Heart left ventricle (tissue), 16 donors: ENCODE measurements at regions of chr6 and their contacts with region 1.

Region 1: DNA sequence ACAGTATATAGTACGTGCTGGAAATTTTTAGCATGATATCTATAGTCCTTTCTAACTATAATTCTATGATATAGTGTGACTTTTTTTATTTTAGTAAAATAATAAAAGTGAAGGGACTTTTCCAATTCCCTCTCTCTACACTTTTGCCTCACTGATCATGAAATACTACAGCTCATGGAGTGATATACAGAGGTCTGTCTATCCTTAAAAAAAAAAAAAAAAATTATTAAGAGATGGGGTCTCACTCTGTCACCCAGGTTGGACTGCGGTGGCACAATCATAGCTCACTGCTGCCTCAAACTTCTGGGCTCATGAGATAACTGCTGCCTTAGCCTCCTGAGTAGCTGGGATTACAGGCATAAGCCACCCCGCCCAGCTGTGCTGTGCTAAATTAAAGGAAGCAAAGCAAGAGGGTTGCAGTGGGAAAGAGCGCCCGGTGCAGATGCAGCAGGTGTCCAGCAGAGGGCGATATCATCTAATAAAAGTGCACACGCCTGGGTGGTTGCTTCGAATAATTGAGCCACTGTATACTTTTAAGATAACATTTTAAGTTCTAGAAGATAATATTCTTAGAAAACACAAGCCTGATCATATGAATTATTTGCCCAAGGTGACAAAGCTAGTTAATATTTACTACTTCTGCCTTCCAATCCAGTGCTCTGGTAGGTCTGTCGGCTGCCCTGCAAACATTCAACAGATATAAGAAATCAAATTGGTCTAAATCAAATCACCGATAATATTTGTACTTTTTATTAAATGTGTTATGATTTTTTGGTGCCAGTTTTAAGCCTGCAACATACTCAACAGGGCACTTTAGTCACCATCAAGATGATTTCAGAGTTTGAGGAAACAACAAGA is 94.9 kb upstream of the NT5E start:
- DNase-seq: peak; percentile 44 to 73 (median 64)
- ATAC-seq: peak; percentile 64 to 89 (median 86)
- H3K4me3 ChIP-seq: no peak overlapping the region
- H3K27ac ChIP-seq: no peak overlapping the region
- H3K4me1 ChIP-seq: no peaks in the 10 kb centered on the region
- H3K27me3 ChIP-seq: peaks cover 0 to 4% (median 0%) of the 10 kb centered on the region in 9 donors
- CTCF ChIP-seq: peak; percentile 85 to 97 (median 92)
- POLR2A ChIP-seq: no peak

Region 2: GRCh38 chr6:85314586-85314985 is 40.4 kb before region 1 on chr6:
- intact Hi-C with region 1: no loop called
- DNase-seq: no peak
- ATAC-seq: no peak
- H3K4me3 ChIP-seq: no peak overlapping the region
- H3K27ac ChIP-seq: no peak overlapping the region
- H3K4me1 ChIP-seq: no peaks in the 10 kb centered on the region
- H3K27me3 ChIP-seq: no peaks in the 10 kb centered on the region
- CTCF ChIP-seq: no peak
- POLR2A ChIP-seq: no peak

Region 3: GRCh38 chr6:85482905-85483700 is 128.1 kb after region 1 on chr6:
- intact Hi-C with region 1: loop called in 9 of 10 experiments (anchors 1 to 2 kb)
- DNase-seq: peak; percentile 64 to 88 (median 69)
- ATAC-seq: peak; percentile 70 to 94 (median 88)
- H3K4me3 ChIP-seq: peak overlapping the region in 1 of 12 donors; percentile 8
- H3K27ac ChIP-seq: peak overlapping the region in 4 of 12 donors; percentile 0 to 49 (median 29)
- H3K4me1 ChIP-seq: peaks cover 0 to 20% (median 2%) of the 10 kb centered on the region in 12 donors
- H3K27me3 ChIP-seq: no peaks in the 10 kb centered on the region
- CTCF ChIP-seq: peak; percentile 97 to 100 (median 100)
- POLR2A ChIP-seq: no peak

Region 4: GRCh38 chr6:85537055-85537494 is 182.1 kb after region 1 on chr6:
- intact Hi-C with region 1: loop called in 2 of 10 experiments (anchors 5 kb)
- DNase-seq: no peak
- ATAC-seq: no peak
- H3K4me3 ChIP-seq: no peak overlapping the region
- H3K27ac ChIP-seq: no peak overlapping the region
- H3K4me1 ChIP-seq: no peaks in the 10 kb centered on the region
- H3K27me3 ChIP-seq: no peaks in the 10 kb centered on the region
- CTCF ChIP-seq: peak; percentile 56 to 77 (median 63)
- POLR2A ChIP-seq: no peak

Region 5: GRCh38 chr6:85685713-85686112 is 330.7 kb after region 1 on chr6:
- intact Hi-C with region 1: loop called in 1 of 10 experiments (anchors 10 kb)
- DNase-seq: no peak
- ATAC-seq: no peak
- H3K4me3 ChIP-seq: no peak overlapping the region
- H3K27ac ChIP-seq: no peak overlapping the region
- H3K4me1 ChIP-seq: no peaks in the 10 kb centered on the region
- H3K27me3 ChIP-seq: no peaks in the 10 kb centered on the region
- CTCF ChIP-seq: no peak
- POLR2A ChIP-seq: no peak